ENCODE measurements at regions of chr19 and their contacts with region 1.

Region 1: GRCh38 chr19:11446652-11447301 is 11.3 kb downstream of the PRKCSH start:
- DNase-seq: peak; percentile 63 to 71
- H3K4me3 ChIP-seq: no peak overlapping the region
- H3K27ac ChIP-seq: peak overlapping the region in 1 of 5 donors; percentile 28
- H3K4me1 ChIP-seq: peaks cover 0 to 11% (median 4%) of the 10 kb centered on the region in 4 donors
- H3K27me3 ChIP-seq: peaks cover 0 to 4% (median 0%) of the 10 kb centered on the region in 3 donors
- CTCF ChIP-seq: peak in 5 of 7 experiments; percentile 69 to 94 (median 83)
- EP300 ChIP-seq: no peak
- POLR2A ChIP-seq: no peak

Region 2: GRCh38 chr19:11293433-11294389 is 153.1 kb before region 1 on chr19:
- intact Hi-C with region 1: loop called (anchors 10 kb)
- DNase-seq: peak; percentile 94 to 98
- H3K4me3 ChIP-seq: peak overlapping the region; percentile 5 to 28 (median 20)
- H3K27ac ChIP-seq: peak overlapping the region in 4 of 5 donors; percentile 10 to 61 (median 46)
- H3K4me1 ChIP-seq: peaks cover 0 to 41% (median 10%) of the 10 kb centered on the region in 4 donors
- H3K27me3 ChIP-seq: no peaks in the 10 kb centered on the region
- CTCF ChIP-seq: peak in 6 of 7 experiments; percentile 78 to 100 (median 98)
- EP300 ChIP-seq: no peak
- POLR2A ChIP-seq: no peak

Region 3: GRCh38 chr19:11738746-11739620 is 292.2 kb after region 1 on chr19 and contains the start of gene ZNF823:
- intact Hi-C with region 1: no loop called
- DNase-seq: peak; percentile 100
- H3K4me3 ChIP-seq: peak within 1 kb of the TSS; percentile 74 to 98 (median 93)
- H3K27ac ChIP-seq: peak within 1 kb of the TSS; percentile 94 to 98 (median 95)
- H3K4me1 ChIP-seq: peaks cover 17 to 34% (median 31%) of the 10 kb centered on the region in 4 donors
- H3K27me3 ChIP-seq: no peaks in the 10 kb centered on the region
- CTCF ChIP-seq: no peak
- EP300 ChIP-seq: no peak
- POLR2A ChIP-seq: peak in 1 of 4 donors; percentile 84
- total RNA-seq, gene ZNF823: 1.2 to 19.3 (median 5.8) TPM

Region 4: GRCh38 chr19:11987405-11988281 is 540.9 kb after region 1 on chr19:
- intact Hi-C with region 1: no loop called
- DNase-seq: peak; percentile 97
- H3K4me3 ChIP-seq: peak overlapping the region; percentile 60 to 99 (median 80)
- H3K27ac ChIP-seq: peak overlapping the region; percentile 84 to 97 (median 89)
- H3K4me1 ChIP-seq: peaks cover 0 to 29% (median 15%) of the 10 kb centered on the region in 4 donors
- H3K27me3 ChIP-seq: no peaks in the 10 kb centered on the region
- CTCF ChIP-seq: peak in 1 of 7 experiments; percentile 13
- EP300 ChIP-seq: no peak
- POLR2A ChIP-seq: peak in 2 of 4 donors; percentile 46 to 49